Activated CD4-positive, alpha-beta T cell treated with anti-CD3 and anti-CD28 coated beads for 36 hours (primary cell): ENCODE measurements at regions of chr14 and their contacts with region 1.

Region 1: GRCh38 chr14:98144964-98145363 is 1127.0 kb downstream of the BCL11B start:
- DNase-seq: no peak
- ATAC-seq: no peak
- H3K4me3 Mint-ChIP-seq: no peak overlapping the region
- H3K27ac Mint-ChIP-seq: peak overlapping the region; percentile 27
- H3K4me1 Mint-ChIP-seq: peaks cover 61% of the 10 kb centered on the region
- H3K27me3 Mint-ChIP-seq: no peaks in the 10 kb centered on the region

Region 2: GRCh38 chr14:97970222-97970621 is 174.7 kb before region 1 on chr14:
- CTCF ChIA-PET with region 1: no interaction called
- POLR2A ChIA-PET with region 1: no interaction called
- intact Hi-C with region 1: no loop called
- DNase-seq: no peak
- ATAC-seq: peak; percentile 59
- H3K4me3 Mint-ChIP-seq: no peak overlapping the region
- H3K27ac Mint-ChIP-seq: peak overlapping the region; percentile 85
- H3K4me1 Mint-ChIP-seq: peaks cover 87% of the 10 kb centered on the region
- H3K27me3 Mint-ChIP-seq: no peaks in the 10 kb centered on the region

Region 3: GRCh38 chr14:98167705-98168104 is 22.7 kb after region 1 on chr14:
- CTCF ChIA-PET with region 1: interaction called, 15 read pairs
- POLR2A ChIA-PET with region 1: interaction called, 6 read pairs
- intact Hi-C with region 1: loop called (anchors 2 kb)
- DNase-seq: peak; percentile 50
- ATAC-seq: no peak
- H3K4me3 Mint-ChIP-seq: peak overlapping the region; percentile 31
- H3K27ac Mint-ChIP-seq: peak overlapping the region; percentile 99
- H3K4me1 Mint-ChIP-seq: peaks cover 92% of the 10 kb centered on the region
- H3K27me3 Mint-ChIP-seq: no peaks in the 10 kb centered on the region

Region 4: GRCh38 chr14:98428483-98428994 is 283.6 kb after region 1 on chr14:
- CTCF ChIA-PET with region 1: no interaction called
- POLR2A ChIA-PET with region 1: no interaction called
- intact Hi-C with region 1: loop called in 1 of 2 experiments (anchors 5 kb)
- DNase-seq: no peak
- ATAC-seq: peak; percentile 58
- H3K4me3 Mint-ChIP-seq: no peak overlapping the region
- H3K27ac Mint-ChIP-seq: no peak overlapping the region
- H3K4me1 Mint-ChIP-seq: peaks cover 23% of the 10 kb centered on the region
- H3K27me3 Mint-ChIP-seq: no peaks in the 10 kb centered on the region